Activated CD4-positive, alpha-beta T cell treated with anti-CD3 and anti-CD28 coated beads for 36 hours (primary cell): ENCODE measurements at regions of chr19 and their contacts with region 1.

Region 1: GRCh38 chr19:39435499-39436349 is at the start of gene RPS16:
- DNase-seq: peak; percentile 100
- ATAC-seq: peak; percentile 84
- H3K4me3 Mint-ChIP-seq: peak within 1 kb of the TSS; percentile 99
- H3K27ac Mint-ChIP-seq: peak within 1 kb of the TSS; percentile 100
- H3K4me1 Mint-ChIP-seq: peaks cover 45% of the 10 kb centered on the region
- H3K27me3 Mint-ChIP-seq: no peaks in the 10 kb centered on the region
- total RNA-seq, gene RPS16: 3,146 to 3,331 TPM

Region 2: GRCh38 chr19:38989066-38989605 is 446.6 kb before region 1 on chr19:
- CTCF ChIA-PET with region 1: no interaction called
- POLR2A ChIA-PET with region 1: no interaction called
- intact Hi-C with region 1: no loop called
- DNase-seq: no peak
- ATAC-seq: no peak
- H3K4me3 Mint-ChIP-seq: no peak overlapping the region
- H3K27ac Mint-ChIP-seq: no peak overlapping the region
- H3K4me1 Mint-ChIP-seq: no peaks in the 10 kb centered on the region
- H3K27me3 Mint-ChIP-seq: peaks cover 17% of the 10 kb centered on the region

Region 3: GRCh38 chr19:39187559-39187957 is 248.2 kb before region 1 on chr19:
- CTCF ChIA-PET with region 1: no interaction called
- POLR2A ChIA-PET with region 1: no interaction called
- intact Hi-C with region 1: no loop called
- DNase-seq: no peak
- ATAC-seq: no peak
- H3K4me3 Mint-ChIP-seq: no peak overlapping the region
- H3K27ac Mint-ChIP-seq: no peak overlapping the region
- H3K4me1 Mint-ChIP-seq: no peaks in the 10 kb centered on the region
- H3K27me3 Mint-ChIP-seq: peaks cover 9% of the 10 kb centered on the region

Region 4: DNA sequence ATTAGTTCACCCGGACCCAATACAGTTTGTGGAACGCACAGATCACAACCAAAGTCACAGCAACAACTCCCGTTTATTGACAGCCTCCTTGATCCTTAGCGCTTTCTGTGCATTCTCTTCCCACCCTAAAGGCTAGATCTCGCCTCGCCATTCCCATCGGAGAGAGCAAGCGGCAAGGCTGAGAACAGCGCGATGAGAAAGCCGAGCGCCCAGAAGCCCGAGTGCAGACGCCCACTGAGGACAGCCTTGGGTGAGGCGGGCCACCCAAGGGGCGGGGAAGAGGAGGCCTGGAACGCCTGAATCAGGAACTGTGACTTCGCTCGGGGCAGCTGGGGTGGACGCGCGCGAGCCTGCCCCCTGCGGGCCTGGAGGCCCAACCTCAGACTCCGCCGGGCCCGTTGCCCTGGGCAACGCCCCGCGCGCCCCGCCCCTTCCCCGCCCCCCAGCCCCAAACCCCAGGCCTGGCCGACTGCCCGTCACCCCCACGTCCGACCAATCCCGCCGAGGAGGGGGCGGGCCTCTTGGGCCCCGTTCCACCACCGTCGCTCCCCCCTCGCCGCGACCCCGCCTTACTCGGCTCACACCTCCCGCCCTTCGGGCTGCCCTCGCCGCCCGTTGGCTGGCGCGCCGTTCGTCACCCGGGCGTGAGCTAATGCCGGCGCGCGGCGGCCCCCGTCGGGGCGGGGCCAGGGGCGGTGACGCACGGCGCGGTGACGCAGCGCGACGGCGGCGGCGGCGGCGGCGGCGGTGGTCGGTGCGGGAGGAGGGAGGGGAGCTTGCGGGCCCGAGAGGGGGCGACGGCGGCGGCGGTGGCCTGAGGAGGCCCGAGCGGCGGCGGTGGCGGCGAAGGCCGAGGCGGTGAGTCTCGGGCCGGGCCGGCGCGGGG is 93.8 kb before region 1 on chr19 and contains the start of gene SAMD4B:
- CTCF ChIA-PET with region 1: no interaction called
- POLR2A ChIA-PET with region 1: interaction called, 12 read pairs
- intact Hi-C with region 1: loop called in 1 of 2 experiments (anchors 1 kb)
- DNase-seq: peak; percentile 100
- ATAC-seq: peak; percentile 90
- H3K4me3 Mint-ChIP-seq: peak within 1 kb of the TSS; percentile 83
- H3K27ac Mint-ChIP-seq: peak within 1 kb of the TSS; percentile 88
- H3K4me1 Mint-ChIP-seq: peaks cover 69% of the 10 kb centered on the region
- H3K27me3 Mint-ChIP-seq: no peaks in the 10 kb centered on the region
- total RNA-seq, gene SAMD4B: 45.2 to 46.9 TPM

Region 5: DNA sequence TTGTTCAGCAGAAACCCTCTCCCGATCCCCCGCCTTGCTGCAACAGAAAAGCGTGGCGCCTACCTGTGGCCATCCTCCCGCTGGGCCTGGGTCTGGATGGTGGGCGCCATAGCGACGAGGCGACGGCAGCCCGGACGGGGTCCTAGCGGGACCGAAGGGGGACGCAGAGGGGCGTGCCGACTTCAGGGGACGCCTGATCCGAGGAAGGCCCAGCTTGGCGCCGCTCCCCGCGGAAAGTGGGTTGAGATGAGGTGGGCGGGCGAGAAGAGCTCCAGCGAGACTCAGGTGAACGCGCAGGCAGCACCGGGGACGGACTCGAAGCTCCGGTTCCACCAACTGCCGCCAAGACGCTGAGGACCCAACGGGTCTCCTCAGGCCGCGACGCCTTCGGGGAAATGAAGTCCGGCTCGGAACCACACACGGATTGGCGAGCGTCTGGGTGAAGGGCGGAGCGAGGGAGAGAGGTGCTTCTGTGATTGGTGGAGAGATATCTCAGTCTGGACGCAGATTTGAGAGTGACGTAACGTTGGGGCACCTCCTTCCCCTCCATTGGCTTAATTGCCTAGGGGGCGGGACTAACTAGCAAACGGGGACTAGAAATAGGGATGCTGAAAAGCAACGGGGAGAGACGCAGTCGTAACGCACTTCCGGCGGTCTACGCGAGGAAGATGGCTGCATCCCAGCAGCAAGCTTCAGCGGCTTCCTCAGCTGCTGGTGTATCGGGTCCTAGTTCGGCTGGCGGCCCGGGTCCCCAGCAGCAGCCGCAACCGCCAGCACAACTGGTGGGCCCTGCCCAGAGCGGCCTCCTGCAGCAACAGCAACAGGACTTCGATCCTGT is 44.8 kb before region 1 on chr19 and contains the starts of genes MED29 and PAF1:
- CTCF ChIA-PET with region 1: interaction called, 12 read pairs
- POLR2A ChIA-PET with region 1: interaction called, 32 read pairs
- intact Hi-C with region 1: loop called (anchors 1 to 5 kb)
- DNase-seq: peak; percentile 98
- ATAC-seq: peak; percentile 97
- H3K4me3 Mint-ChIP-seq: peak within 1 kb of the TSS; percentile 99
- H3K27ac Mint-ChIP-seq: peak within 1 kb of the TSS; percentile 98
- H3K4me1 Mint-ChIP-seq: peaks cover 28% of the 10 kb centered on the region
- H3K27me3 Mint-ChIP-seq: no peaks in the 10 kb centered on the region
- total RNA-seq, gene MED29: 24.0 to 34.6 TPM
- total RNA-seq, gene PAF1: 40.4 to 54.2 TPM

Region 6: GRCh38 chr19:39403331-39404312 is 32.1 kb before region 1 on chr19:
- CTCF ChIA-PET with region 1: interaction called, 13 read pairs
- POLR2A ChIA-PET with region 1: interaction called, 21 read pairs
- intact Hi-C with region 1: loop called (anchors 2 to 5 kb)
- DNase-seq: peak; percentile 98
- ATAC-seq: peak; percentile 27
- H3K4me3 Mint-ChIP-seq: peak overlapping the region; percentile 75
- H3K27ac Mint-ChIP-seq: peak overlapping the region; percentile 100
- H3K4me1 Mint-ChIP-seq: peaks cover 64% of the 10 kb centered on the region
- H3K27me3 Mint-ChIP-seq: no peaks in the 10 kb centered on the region

Region 7: GRCh38 chr19:39532233-39533002 is 96.7 kb after region 1 on chr19 and contains the start of gene EID2B:
- CTCF ChIA-PET with region 1: interaction called, 47 read pairs
- POLR2A ChIA-PET with region 1: interaction called, 13 read pairs
- intact Hi-C with region 1: loop called (anchors 1 kb)
- DNase-seq: peak; percentile 97
- ATAC-seq: peak; percentile 97
- H3K4me3 Mint-ChIP-seq: peak within 1 kb of the TSS; percentile 93
- H3K27ac Mint-ChIP-seq: peak within 1 kb of the TSS; percentile 86
- H3K4me1 Mint-ChIP-seq: peaks cover 26% of the 10 kb centered on the region
- H3K27me3 Mint-ChIP-seq: no peaks in the 10 kb centered on the region
- total RNA-seq, gene EID2B: 1.4 to 3.5 TPM